MCF 10A (cell line): ENCODE measurements at regions of chr2 and their contacts with region 1.

Region 1: DNA sequence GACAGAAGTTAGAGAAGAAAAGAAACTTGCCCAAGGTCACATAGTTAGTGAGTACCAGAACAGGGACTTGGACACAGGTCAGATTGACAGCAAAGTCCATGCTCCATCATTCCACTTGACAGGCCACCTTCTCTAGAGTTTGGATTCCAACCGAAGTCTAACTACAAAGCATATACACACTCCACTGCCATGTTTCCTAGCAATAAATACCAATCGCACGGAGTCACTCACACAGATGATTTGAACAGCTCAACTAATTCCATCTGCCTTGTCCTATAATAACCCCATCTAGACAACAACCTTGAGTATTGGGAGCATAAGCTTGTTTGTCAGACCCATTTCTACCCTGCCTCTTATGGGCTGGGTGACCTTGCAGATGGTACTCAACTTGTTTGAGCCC is 334.6 kb upstream of the MGAT5 start:
- DNase-seq: no peak
- H3K4me3 Mint-ChIP-seq: no peak overlapping the region
- H3K27ac Mint-ChIP-seq: no peak overlapping the region
- H3K4me1 Mint-ChIP-seq: no peaks in the 10 kb centered on the region
- H3K27me3 Mint-ChIP-seq: no peaks in the 10 kb centered on the region
- CTCF ChIP-seq: no peak

Region 2: DNA sequence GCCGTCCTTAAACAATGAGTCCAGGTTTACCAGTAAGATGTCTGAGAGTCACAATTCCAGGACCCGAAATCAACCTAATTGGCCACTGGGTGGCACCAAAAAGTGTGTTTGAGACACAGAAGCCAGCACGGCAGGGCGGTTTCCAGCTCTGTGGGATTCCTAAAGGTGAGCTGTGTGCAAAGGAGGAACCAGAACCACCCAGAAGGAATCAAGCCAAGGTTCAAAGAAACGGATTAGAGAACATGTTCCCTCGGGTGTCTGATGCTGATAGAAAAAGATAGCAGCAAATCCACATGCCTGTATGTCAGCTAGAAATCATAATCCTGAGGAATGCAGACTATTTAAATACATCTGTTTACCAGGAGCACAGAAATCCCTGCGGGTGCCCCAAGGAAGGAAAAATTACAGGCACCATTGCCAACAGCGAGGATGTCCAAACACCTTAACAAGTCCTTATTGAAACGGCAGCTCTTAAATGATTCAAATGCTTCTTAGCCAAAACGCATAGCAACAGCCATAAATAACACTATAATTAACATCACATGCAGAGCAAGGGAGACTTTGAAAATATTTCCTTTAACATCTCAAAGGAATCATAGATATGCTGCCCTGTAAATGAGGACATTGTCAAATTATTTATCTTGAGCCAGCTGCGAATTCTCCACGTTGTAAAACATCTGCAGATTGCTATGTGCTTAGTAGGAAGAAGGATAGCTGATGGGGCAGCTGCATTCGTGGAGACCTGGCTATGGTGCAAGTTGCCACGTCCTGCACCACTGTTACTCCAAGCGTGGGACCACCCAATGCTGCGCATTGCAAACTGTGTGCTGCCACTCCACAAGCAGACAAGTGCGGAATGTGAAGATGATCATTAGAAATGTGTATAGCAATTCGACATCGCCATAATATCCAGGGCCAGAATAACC is 32.3 kb before region 1 on chr2:
- CTCF ChIA-PET with region 1: interaction called, 13 read pairs
- POLR2A ChIA-PET with region 1: no interaction called
- intact Hi-C with region 1: no loop called
- DNase-seq: peak; percentile 87
- H3K4me3 Mint-ChIP-seq: no peak overlapping the region
- H3K27ac Mint-ChIP-seq: no peak overlapping the region
- H3K4me1 Mint-ChIP-seq: peaks cover 7% of the 10 kb centered on the region
- H3K27me3 Mint-ChIP-seq: peaks cover 14% of the 10 kb centered on the region
- CTCF ChIP-seq: peak; percentile 52